ENCODE measurements at regions of chr1 and their contacts with region 1.

Region 1: GRCh38 chr1:8848663-8849386 is 29.7 kb downstream of the ENO1 start:
- DNase-seq: peak; percentile 87
- ATAC-seq: peak; percentile 96
- H3K4me3 Mint-ChIP-seq: no peak overlapping the region
- H3K27ac Mint-ChIP-seq: no peak overlapping the region
- H3K4me1 Mint-ChIP-seq: no peaks in the 10 kb centered on the region
- H3K27me3 Mint-ChIP-seq: no peaks in the 10 kb centered on the region
- CTCF ChIP-seq: peak; percentile 96

Region 2: DNA sequence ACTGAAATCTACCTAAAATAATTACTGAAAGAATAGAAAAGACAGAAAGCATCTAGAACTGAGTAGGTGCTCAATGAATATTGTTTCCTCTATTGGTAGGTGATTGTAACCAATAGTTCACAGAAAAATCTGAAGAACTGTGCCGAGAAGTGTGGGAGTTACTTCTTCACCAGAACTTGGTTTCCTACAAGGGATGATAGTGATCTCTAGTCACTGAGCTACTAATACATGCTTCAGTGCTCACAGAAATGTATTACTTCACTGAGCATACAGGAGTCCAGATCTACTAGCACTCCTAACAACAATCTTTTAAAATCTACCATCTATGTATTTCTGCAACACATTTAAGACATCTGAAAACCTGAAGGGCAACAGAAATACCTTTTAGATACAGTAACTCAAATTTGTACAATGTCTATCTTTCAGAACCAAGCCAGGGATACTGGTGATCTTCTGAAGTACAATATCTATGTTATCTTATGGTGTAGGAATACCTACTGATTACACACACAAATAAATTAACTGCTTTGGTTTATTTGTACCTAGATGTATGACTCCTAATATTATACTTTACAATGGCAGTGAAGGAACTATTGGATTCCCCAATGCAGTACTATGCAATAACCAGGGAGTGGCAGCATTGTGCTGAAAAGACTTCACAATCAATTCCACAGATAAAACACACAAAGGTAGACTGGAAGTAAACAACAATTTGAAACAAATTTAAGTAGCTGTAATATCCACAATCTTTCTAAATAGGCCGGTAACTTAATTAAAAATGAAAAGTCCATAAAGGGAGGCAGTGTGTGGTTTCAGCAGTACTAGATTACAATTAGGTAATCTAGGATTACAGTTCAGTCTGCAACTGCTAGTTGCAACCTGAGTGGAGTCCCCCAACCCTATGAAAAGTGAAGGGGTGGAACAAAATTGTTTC is 287.9 kb before region 1 on chr1:
- CTCF ChIA-PET with region 1: interaction called, 64 read pairs
- POLR2A ChIA-PET with region 1: no interaction called
- intact Hi-C with region 1: loop called (anchors 5 kb)
- DNase-seq: peak; percentile 25
- ATAC-seq: peak; percentile 83
- H3K4me3 Mint-ChIP-seq: no peak overlapping the region
- H3K27ac Mint-ChIP-seq: peak overlapping the region; percentile 3
- H3K4me1 Mint-ChIP-seq: peaks cover 24% of the 10 kb centered on the region
- H3K27me3 Mint-ChIP-seq: no peaks in the 10 kb centered on the region
- CTCF ChIP-seq: peak; percentile 96

Region 3: GRCh38 chr1:8727809-8728213 is 121.0 kb before region 1 on chr1:
- CTCF ChIA-PET with region 1: interaction called, 60 read pairs
- POLR2A ChIA-PET with region 1: interaction called, 3 read pairs
- intact Hi-C with region 1: loop called (anchors 10 kb)
- DNase-seq: no peak
- ATAC-seq: no peak
- H3K4me3 Mint-ChIP-seq: no peak overlapping the region
- H3K27ac Mint-ChIP-seq: no peak overlapping the region
- H3K4me1 Mint-ChIP-seq: peaks cover 15% of the 10 kb centered on the region
- H3K27me3 Mint-ChIP-seq: no peaks in the 10 kb centered on the region
- CTCF ChIP-seq: no peak

Region 4: GRCh38 chr1:8780405-8780804 is 68.4 kb before region 1 on chr1:
- CTCF ChIA-PET with region 1: interaction called, 22 read pairs
- POLR2A ChIA-PET with region 1: no interaction called
- intact Hi-C with region 1: no loop called
- DNase-seq: no peak
- ATAC-seq: no peak
- H3K4me3 Mint-ChIP-seq: no peak overlapping the region
- H3K27ac Mint-ChIP-seq: no peak overlapping the region
- H3K4me1 Mint-ChIP-seq: peaks cover 20% of the 10 kb centered on the region
- H3K27me3 Mint-ChIP-seq: no peaks in the 10 kb centered on the region
- CTCF ChIP-seq: no peak

Region 5: GRCh38 chr1:8835941-8836643 is 12.7 kb before region 1 on chr1:
- CTCF ChIA-PET with region 1: interaction called, 63 read pairs
- POLR2A ChIA-PET with region 1: interaction called, 3 read pairs
- intact Hi-C with region 1: no loop called
- DNase-seq: no peak
- ATAC-seq: no peak
- H3K4me3 Mint-ChIP-seq: no peak overlapping the region
- H3K27ac Mint-ChIP-seq: no peak overlapping the region
- H3K4me1 Mint-ChIP-seq: no peaks in the 10 kb centered on the region
- H3K27me3 Mint-ChIP-seq: no peaks in the 10 kb centered on the region
- CTCF ChIP-seq: no peak

Region 6: GRCh38 chr1:8873506-8874229 is 24.8 kb after region 1 on chr1:
- CTCF ChIA-PET with region 1: interaction called, 11 read pairs
- POLR2A ChIA-PET with region 1: interaction called, 197 read pairs
- intact Hi-C with region 1: no loop called
- DNase-seq: peak; percentile 92
- ATAC-seq: peak; percentile 52
- H3K4me3 Mint-ChIP-seq: peak overlapping the region; percentile 88
- H3K27ac Mint-ChIP-seq: peak overlapping the region; percentile 100
- H3K4me1 Mint-ChIP-seq: peaks cover 62% of the 10 kb centered on the region
- H3K27me3 Mint-ChIP-seq: no peaks in the 10 kb centered on the region
- CTCF ChIP-seq: no peak

Region 7: DNA sequence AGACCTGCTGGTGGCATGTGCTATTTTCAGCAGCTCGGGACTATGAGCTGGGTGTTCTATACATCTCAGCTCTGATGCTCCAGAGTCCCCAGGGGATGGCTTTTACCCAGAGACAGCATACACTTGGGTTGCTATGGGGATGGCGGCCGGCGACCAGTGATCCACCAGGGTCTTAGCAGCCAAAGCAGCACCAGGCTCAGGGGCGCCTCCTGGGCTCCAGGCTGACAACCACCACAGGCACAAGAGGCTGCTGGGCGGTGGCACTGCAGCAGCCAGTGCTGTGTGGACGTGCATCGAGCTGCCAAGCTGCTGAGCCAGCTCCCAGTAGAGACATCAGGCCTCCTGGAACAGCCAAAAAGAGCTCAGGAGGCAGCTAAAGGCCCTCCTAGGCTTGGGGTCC is 1012.5 kb after region 1 on chr1:
- CTCF ChIA-PET with region 1: no interaction called
- POLR2A ChIA-PET with region 1: no interaction called
- intact Hi-C with region 1: no loop called
- DNase-seq: no peak
- ATAC-seq: no peak
- H3K4me3 Mint-ChIP-seq: no peak overlapping the region
- H3K27ac Mint-ChIP-seq: no peak overlapping the region
- H3K4me1 Mint-ChIP-seq: peaks cover 8% of the 10 kb centered on the region
- H3K27me3 Mint-ChIP-seq: no peaks in the 10 kb centered on the region
- CTCF ChIP-seq: no peak

Measured in activated CD8-positive, alpha-beta T cell treated with anti-CD3 and anti-CD28 coated beads for 36 hours (primary cell).